Activated CD4-positive, alpha-beta memory T cell treated with anti-CD3 and anti-CD28 coated beads for 36 hours (primary cell): ENCODE measurements at regions of chr11 and their contacts with region 1.

Region 1: GRCh38 chr11:62427630-62428233 is 8.9 kb downstream of the SCGB1A1 start:
- DNase-seq: peak; percentile 39
- H3K4me3 Mint-ChIP-seq: peak overlapping the region; percentile 27
- H3K27ac Mint-ChIP-seq: peak overlapping the region; percentile 79
- H3K4me1 Mint-ChIP-seq: peaks cover 32% of the 10 kb centered on the region
- H3K27me3 Mint-ChIP-seq: no peaks in the 10 kb centered on the region

Region 2: GRCh38 chr11:62444236-62444833 is 16.6 kb after region 1 on chr11:
- CTCF ChIA-PET with region 1: interaction called, 12 read pairs
- POLR2A ChIA-PET with region 1: no interaction called
- intact Hi-C with region 1: no loop called
- DNase-seq: peak; percentile 61
- H3K4me3 Mint-ChIP-seq: peak overlapping the region; percentile 68
- H3K27ac Mint-ChIP-seq: no peak overlapping the region
- H3K4me1 Mint-ChIP-seq: peaks cover 9% of the 10 kb centered on the region
- H3K27me3 Mint-ChIP-seq: peaks cover 11% of the 10 kb centered on the region

Region 3: DNA sequence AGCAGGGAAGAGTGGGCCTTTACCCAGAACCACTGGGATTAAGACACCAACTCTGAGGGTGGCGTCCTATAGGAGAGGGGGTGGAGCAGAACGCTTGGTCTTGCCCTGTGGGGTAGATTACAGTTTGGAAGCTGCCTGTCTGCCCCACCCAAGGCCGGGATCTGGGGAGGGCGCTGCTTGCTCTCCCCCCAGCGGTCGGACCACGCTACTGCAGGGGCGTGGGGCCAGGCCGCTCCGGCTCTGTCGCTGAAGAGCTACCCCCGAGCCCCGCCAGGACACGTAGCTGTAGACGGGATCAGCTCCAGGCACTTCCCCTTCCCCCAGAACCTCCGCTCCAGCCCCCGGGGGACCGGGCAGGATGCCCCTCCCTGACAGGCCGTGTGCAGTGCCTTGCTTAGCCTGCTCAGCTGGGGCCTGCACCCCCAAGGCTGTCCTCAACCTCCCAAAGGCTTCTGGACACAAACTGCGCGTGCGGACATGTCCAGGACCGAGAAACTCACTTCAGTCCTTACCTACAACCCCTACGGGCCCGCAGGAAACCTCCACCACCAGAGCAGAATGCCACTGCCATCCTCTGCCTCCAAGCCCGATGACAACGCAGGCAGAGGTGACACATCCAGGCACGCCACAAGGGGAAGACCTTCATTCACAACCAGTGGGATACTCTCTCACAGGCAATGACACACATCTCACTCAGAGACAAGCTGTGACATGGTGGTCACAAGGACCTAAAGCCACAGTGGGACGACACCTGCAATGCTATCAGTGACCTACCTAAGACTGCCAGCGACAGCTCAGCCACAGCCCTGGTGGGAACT is 115.2 kb after region 1 on chr11:
- CTCF ChIA-PET with region 1: interaction called, 272 read pairs
- POLR2A ChIA-PET with region 1: interaction called, 16 read pairs
- intact Hi-C with region 1: loop called (anchors 1 kb)
- DNase-seq: peak; percentile 88
- H3K4me3 Mint-ChIP-seq: peak overlapping the region; percentile 93
- H3K27ac Mint-ChIP-seq: peak overlapping the region; percentile 83
- H3K4me1 Mint-ChIP-seq: peaks cover 75% of the 10 kb centered on the region
- H3K27me3 Mint-ChIP-seq: no peaks in the 10 kb centered on the region

Region 4: GRCh38 chr11:62567018-62567633 is 139.4 kb after region 1 on chr11:
- CTCF ChIA-PET with region 1: interaction called, 161 read pairs
- POLR2A ChIA-PET with region 1: no interaction called
- intact Hi-C with region 1: no loop called
- DNase-seq: no peak
- H3K4me3 Mint-ChIP-seq: no peak overlapping the region
- H3K27ac Mint-ChIP-seq: peak overlapping the region; percentile 85
- H3K4me1 Mint-ChIP-seq: peaks cover 62% of the 10 kb centered on the region
- H3K27me3 Mint-ChIP-seq: no peaks in the 10 kb centered on the region

Region 5: GRCh38 chr11:62671575-62672389 is 244.1 kb after region 1 on chr11 and contains the starts of genes LBHD1 and UQCC3:
- CTCF ChIA-PET with region 1: interaction called, 3 read pairs
- POLR2A ChIA-PET with region 1: no interaction called
- intact Hi-C with region 1: loop called (anchors 10 kb)
- DNase-seq: peak; percentile 93
- H3K4me3 Mint-ChIP-seq: peak within 1 kb of the TSS; percentile 94
- H3K27ac Mint-ChIP-seq: peak within 1 kb of the TSS; percentile 98
- H3K4me1 Mint-ChIP-seq: peaks cover 55% of the 10 kb centered on the region
- H3K27me3 Mint-ChIP-seq: no peaks in the 10 kb centered on the region
- total RNA-seq, gene LBHD1: 10.8 to 14.1 TPM
- total RNA-seq, gene UQCC3: 6.0 to 6.2 TPM